Psoas muscle (tissue), 8 donors: ENCODE measurements at regions of chr11 and their contacts with region 1.

Region 1: GRCh38 chr11:74726547-74727182 is 4.6 kb downstream of the CHRDL2 start:
- DNase-seq: peak; percentile 83 to 92
- ATAC-seq: peak; percentile 98 to 99 (median 98)
- H3K4me3 ChIP-seq: no peak overlapping the region
- H3K27ac ChIP-seq: peak overlapping the region; percentile 32
- H3K4me1 ChIP-seq: peaks cover 3% of the 10 kb centered on the region
- H3K27me3 ChIP-seq: peaks cover 0 to 19% (median 8%) of the 10 kb centered on the region in 3 donors
- CTCF ChIP-seq: peak; percentile 93

Region 2: DNA sequence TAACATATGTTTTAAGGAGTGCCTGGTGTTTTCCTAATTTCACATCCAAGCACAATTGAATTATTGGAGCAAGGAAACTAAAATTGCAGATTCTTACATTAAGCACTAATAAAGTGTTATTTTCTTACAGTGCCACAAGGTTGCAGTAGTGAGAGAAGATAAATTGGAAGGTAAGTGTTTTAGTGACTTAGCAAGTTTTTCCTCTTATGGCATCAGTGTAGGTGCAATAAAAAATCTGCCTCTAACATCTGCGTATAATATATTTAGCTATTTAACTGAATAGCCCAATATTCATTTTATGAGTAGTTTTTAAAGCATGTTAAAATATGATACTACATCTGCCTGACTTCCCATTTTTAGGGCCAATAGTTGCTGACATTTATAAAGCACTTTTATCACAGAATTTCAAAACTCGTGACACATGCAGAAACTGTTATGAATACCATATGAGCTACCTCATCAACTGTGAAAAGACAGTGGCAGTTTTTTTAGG is 115.2 kb before region 1 on chr11:
- intact Hi-C with region 1: loop called in 1 of 2 experiments (anchors 5 kb)
- DNase-seq: no peak
- ATAC-seq: peak in 2 of 4 donors; percentile 37 to 65
- H3K4me3 ChIP-seq: no peak overlapping the region
- H3K27ac ChIP-seq: peak overlapping the region; percentile 17
- H3K4me1 ChIP-seq: no peaks in the 10 kb centered on the region
- H3K27me3 ChIP-seq: no peaks in the 10 kb centered on the region
- CTCF ChIP-seq: peak; percentile 46

Region 3: DNA sequence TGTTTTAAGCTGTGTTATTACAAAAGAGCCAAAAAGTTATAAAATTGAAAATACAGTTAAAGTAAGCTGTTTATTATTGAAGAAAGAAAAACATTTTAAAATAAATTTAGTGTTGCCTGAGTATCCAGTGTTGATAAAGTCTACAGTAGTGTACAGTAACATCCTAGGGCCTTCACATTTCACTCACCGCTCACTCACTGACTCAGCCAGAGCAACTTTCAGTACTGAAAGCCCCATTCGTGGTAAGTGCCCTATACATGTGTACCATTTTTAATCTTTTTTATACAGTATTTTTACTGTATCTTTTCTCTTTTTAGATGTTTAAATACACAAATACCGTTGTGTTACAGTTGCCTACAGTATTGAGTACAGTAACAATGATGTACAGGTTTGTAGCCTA is 99.3 kb before region 1 on chr11:
- intact Hi-C with region 1: loop called (anchors 1 to 5 kb)
- DNase-seq: no peak
- ATAC-seq: no peak
- H3K4me3 ChIP-seq: no peak overlapping the region
- H3K27ac ChIP-seq: no peak overlapping the region
- H3K4me1 ChIP-seq: no peaks in the 10 kb centered on the region
- H3K27me3 ChIP-seq: no peaks in the 10 kb centered on the region
- CTCF ChIP-seq: no peak

Region 4: GRCh38 chr11:74634537-74634936 is 92.1 kb before region 1 on chr11:
- intact Hi-C with region 1: loop called (anchors 2 to 5 kb)
- DNase-seq: no peak
- ATAC-seq: peak; percentile 75 to 83 (median 82)
- H3K4me3 ChIP-seq: no peak overlapping the region
- H3K27ac ChIP-seq: no peak overlapping the region
- H3K4me1 ChIP-seq: peaks cover 4% of the 10 kb centered on the region
- H3K27me3 ChIP-seq: no peaks in the 10 kb centered on the region
- CTCF ChIP-seq: peak; percentile 43

Region 5: DNA sequence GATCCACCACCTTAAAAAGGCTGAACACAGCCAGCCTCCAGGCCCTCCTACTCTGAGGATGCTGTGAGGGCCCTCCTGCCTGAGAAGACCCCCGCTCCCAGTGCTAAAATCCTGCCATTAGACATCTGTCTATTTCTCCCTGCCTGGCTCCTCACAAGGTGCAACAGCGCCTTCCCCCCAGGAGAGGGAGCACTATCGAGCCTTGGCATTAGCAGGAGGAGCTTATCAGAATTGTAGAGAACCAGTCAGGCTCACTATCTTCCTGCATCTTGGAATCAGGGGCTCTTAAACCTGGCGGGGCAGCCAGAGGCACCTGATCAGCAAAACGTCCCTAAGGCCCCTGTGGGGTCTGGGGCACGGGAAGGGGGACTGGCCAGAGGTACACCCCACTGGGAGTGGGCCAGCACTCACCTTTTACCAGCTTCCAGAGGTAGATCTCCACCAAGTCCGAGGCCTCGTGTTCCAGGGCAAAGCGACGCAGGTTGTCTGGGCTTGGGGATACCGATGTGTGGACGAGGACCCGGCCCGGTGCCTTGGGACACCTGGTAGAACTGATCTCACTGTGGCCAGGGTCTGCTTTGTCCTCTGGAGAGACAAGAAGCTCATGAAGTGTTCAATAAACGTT is 24.2 kb before region 1 on chr11:
- intact Hi-C with region 1: loop called in 1 of 2 experiments (anchors 1 kb)
- DNase-seq: peak; percentile 60 to 79
- ATAC-seq: peak; percentile 74 to 90 (median 84)
- H3K4me3 ChIP-seq: no peak overlapping the region
- H3K27ac ChIP-seq: no peak overlapping the region
- H3K4me1 ChIP-seq: peaks cover 5% of the 10 kb centered on the region
- H3K27me3 ChIP-seq: no peaks in the 10 kb centered on the region
- CTCF ChIP-seq: peak; percentile 90

Region 6: DNA sequence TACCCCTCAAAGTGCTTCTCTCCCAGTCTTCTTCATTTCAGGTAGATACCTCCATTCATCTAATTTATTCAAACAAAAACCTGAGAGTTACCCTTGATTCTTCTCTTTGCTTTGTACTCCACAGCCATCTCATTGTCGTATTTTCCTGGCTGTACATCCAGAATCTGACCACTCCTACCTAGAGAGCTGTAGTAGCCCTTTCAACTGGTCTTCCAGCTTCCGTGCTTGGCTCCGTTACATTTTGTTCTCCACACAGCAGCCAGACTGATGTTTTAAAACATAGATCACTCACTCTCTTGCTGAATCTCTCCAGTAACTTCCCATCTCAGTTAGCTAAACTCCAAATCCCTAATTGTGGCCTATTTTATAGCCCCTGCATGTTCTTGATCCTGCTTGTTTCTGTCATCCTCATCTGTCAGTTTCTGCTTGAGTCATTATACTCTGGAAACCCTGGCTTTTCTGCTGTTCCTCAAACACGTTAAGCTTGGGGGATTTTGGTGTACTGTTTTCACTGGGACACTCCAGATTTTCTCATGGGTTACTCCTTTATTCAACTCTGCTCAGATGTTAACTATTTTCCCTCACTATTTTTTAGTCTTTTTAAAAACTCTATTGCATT is 229.8 kb after region 1 on chr11:
- intact Hi-C with region 1: no loop called
- DNase-seq: no peak
- ATAC-seq: peak in 2 of 4 donors; percentile 79 to 90
- H3K4me3 ChIP-seq: no peak overlapping the region
- H3K27ac ChIP-seq: no peak overlapping the region
- H3K4me1 ChIP-seq: peaks cover 49% of the 10 kb centered on the region
- H3K27me3 ChIP-seq: no peaks in the 10 kb centered on the region
- CTCF ChIP-seq: no peak